ENCODE measurements at regions of chr12 and their contacts with region 1.

Region 1: GRCh38 chr12:50597200-50598195 is 92.7 kb downstream of the DIP2B start:
- DNase-seq: peak; percentile 81
- H3K4me3 Mint-ChIP-seq: peak overlapping the region; percentile 17
- H3K27ac Mint-ChIP-seq: peak overlapping the region; percentile 68
- H3K4me1 Mint-ChIP-seq: peaks cover 21% of the 10 kb centered on the region
- H3K27me3 Mint-ChIP-seq: no peaks in the 10 kb centered on the region

Region 2: GRCh38 chr12:50317198-50317597 is 280.3 kb before region 1 on chr12:
- intact Hi-C with region 1: no loop called
- DNase-seq: no peak
- H3K4me3 Mint-ChIP-seq: no peak overlapping the region
- H3K27ac Mint-ChIP-seq: no peak overlapping the region
- H3K4me1 Mint-ChIP-seq: no peaks in the 10 kb centered on the region
- H3K27me3 Mint-ChIP-seq: no peaks in the 10 kb centered on the region

Region 3: DNA sequence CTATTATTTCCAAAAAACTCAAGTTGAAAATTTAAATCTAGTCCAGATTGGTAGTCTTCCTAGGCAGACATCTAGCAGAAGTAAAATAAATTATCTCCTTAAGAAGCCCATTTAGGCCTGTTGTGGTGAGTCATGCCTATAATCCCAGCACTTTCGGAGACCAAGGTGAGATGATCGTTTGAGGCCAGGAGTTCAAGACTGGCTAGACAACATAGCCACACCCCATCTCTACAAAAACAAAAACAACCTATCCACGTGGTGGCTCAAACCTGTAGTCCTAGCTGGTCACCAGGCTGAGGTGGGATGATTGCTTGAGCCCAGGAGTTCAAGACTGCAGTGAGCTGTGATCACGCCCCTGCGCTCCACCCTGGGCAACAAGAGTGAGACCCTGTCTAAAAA is 178.0 kb before region 1 on chr12:
- intact Hi-C with region 1: no loop called
- DNase-seq: no peak
- H3K4me3 Mint-ChIP-seq: no peak overlapping the region
- H3K27ac Mint-ChIP-seq: no peak overlapping the region
- H3K4me1 Mint-ChIP-seq: peaks cover 18% of the 10 kb centered on the region
- H3K27me3 Mint-ChIP-seq: no peaks in the 10 kb centered on the region

Region 4: DNA sequence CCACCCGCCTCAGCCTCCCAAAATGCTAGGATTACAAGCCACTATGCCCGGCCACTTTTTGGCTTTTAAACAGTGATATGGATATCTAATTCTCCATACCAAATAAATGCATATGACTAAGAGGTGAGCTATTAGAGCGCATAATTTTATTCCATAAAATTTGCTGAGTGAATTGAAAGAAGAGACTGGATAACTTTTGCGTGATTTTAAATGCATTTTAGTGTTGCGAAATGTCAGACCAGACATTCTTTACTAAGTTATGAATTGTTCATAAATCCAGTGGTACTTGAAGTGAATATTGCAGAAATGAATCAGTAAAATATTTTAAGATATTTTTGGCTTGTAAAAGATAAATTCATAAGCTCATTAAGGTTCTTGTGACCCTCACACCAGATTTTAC is 143.6 kb before region 1 on chr12:
- intact Hi-C with region 1: no loop called
- DNase-seq: no peak
- H3K4me3 Mint-ChIP-seq: no peak overlapping the region
- H3K27ac Mint-ChIP-seq: no peak overlapping the region
- H3K4me1 Mint-ChIP-seq: no peaks in the 10 kb centered on the region
- H3K27me3 Mint-ChIP-seq: no peaks in the 10 kb centered on the region

Region 5: GRCh38 chr12:50533203-50533584 is 64.3 kb before region 1 on chr12:
- intact Hi-C with region 1: loop called (anchors 5 kb)
- DNase-seq: peak; percentile 69
- H3K4me3 Mint-ChIP-seq: no peak overlapping the region
- H3K27ac Mint-ChIP-seq: no peak overlapping the region
- H3K4me1 Mint-ChIP-seq: peaks cover 34% of the 10 kb centered on the region
- H3K27me3 Mint-ChIP-seq: no peaks in the 10 kb centered on the region

Region 6: GRCh38 chr12:50542448-50542847 is 55.0 kb before region 1 on chr12:
- intact Hi-C with region 1: loop called (anchors 2 kb)
- DNase-seq: peak; percentile 65
- H3K4me3 Mint-ChIP-seq: no peak overlapping the region
- H3K27ac Mint-ChIP-seq: peak overlapping the region; percentile 91
- H3K4me1 Mint-ChIP-seq: peaks cover 29% of the 10 kb centered on the region
- H3K27me3 Mint-ChIP-seq: no peaks in the 10 kb centered on the region

Region 7: DNA sequence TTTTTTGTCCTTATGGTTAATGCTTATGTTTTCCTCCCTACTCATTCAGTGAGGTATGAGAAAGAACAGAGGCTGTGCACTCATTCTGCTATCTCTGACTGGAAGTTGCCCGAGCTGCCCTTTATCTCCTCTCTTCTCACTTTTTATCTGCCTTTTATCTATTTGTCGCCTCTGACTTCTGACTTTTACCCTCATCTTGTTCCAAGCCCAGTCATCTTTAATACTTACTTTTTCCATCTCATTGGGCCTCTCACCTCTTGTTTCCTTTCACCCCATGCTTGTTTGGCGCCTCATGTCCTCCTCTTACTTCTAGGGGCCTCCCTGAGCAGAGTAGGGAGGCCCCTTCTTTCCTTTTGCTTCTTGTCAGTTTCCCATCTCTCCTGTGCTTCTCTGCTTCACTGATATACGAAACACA is 42.0 kb before region 1 on chr12:
- intact Hi-C with region 1: loop called (anchors 5 kb)
- DNase-seq: no peak
- H3K4me3 Mint-ChIP-seq: peak overlapping the region; percentile 59
- H3K27ac Mint-ChIP-seq: peak overlapping the region; percentile 91
- H3K4me1 Mint-ChIP-seq: peaks cover 18% of the 10 kb centered on the region
- H3K27me3 Mint-ChIP-seq: no peaks in the 10 kb centered on the region

Region 8: DNA sequence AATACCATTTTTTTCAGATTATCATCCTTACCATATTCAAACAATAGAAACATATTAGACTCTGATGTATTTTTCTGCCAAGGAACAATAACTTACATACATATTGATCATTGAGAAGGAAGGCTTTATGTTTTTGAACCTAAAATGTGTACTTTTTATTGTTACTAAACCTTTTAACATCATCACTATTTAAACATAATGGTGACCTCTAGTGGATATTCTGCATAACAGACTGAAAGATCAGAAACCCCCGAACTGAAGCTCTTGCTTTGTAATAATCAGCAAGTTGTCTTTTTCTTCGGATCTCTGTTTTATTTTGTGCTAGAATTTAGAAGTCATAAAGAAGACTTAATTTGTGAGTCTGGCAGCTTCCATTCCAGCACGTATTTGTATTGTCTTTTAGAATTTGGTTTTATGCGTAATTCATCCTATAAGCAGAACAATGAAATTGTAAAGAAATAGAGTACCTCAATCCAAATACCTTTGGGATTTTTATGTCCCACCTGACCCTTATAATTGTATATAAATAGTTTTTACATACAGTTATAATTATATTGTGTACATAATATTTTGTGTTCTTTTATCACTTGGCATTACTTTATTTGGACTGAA is 40.5 kb after region 1 on chr12:
- intact Hi-C with region 1: loop called (anchors 1 kb)
- DNase-seq: no peak
- H3K4me3 Mint-ChIP-seq: no peak overlapping the region
- H3K27ac Mint-ChIP-seq: no peak overlapping the region
- H3K4me1 Mint-ChIP-seq: peaks cover 30% of the 10 kb centered on the region
- H3K27me3 Mint-ChIP-seq: no peaks in the 10 kb centered on the region

Region 9: DNA sequence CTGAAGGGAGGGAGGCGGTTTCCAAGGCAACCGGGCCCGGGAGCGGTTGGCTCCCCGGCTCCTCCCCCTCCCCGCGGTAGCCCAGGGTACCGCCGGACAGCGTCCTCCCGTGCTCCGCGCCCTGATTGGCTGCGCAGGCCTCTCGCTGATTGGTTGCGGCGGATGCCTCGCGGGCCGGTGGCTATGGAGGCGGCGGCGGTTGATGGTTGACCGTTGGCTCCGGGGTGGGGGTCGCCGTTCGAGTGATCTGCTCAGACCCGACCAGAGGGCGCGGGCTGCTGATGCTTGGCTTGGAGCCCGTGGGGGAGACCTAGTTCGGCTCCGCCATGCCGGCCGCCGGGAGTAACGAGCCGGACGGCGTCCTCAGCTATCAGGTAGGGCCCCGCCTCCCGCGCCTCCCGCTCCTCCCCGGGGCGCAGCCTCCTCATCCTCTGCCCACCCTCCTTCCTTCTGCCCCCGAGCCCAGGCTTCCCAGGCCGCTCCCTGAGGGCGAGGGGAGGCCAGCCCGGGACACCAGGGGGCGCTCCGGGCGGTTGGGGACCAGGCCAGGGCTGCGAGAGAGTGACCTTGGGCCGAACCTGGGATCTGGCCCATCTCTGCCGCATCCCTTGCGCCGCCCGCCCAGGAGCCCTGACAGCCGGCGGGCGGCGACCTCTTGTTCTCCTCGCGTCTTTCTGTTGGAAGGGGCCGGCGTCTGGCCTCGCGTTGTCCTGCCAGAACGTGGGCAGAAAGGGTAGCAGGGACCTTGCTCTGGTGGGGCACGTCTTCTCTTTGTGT is 827.4 kb after region 1 on chr12 and contains the start of gene SLC4A8:
- intact Hi-C with region 1: no loop called
- DNase-seq: peak; percentile 95
- H3K4me3 Mint-ChIP-seq: peak within 1 kb of the TSS; percentile 83
- H3K27ac Mint-ChIP-seq: peak within 1 kb of the TSS; percentile 42
- H3K4me1 Mint-ChIP-seq: peaks cover 17% of the 10 kb centered on the region
- H3K27me3 Mint-ChIP-seq: peaks cover 10% of the 10 kb centered on the region
- total RNA-seq, gene SLC4A8: 1.4 and 2.3 TPM in 2 replicates